Adrenal gland (tissue), 19 donors: ENCODE measurements at regions of chr15 and their contacts with region 1.

Region 1: DNA sequence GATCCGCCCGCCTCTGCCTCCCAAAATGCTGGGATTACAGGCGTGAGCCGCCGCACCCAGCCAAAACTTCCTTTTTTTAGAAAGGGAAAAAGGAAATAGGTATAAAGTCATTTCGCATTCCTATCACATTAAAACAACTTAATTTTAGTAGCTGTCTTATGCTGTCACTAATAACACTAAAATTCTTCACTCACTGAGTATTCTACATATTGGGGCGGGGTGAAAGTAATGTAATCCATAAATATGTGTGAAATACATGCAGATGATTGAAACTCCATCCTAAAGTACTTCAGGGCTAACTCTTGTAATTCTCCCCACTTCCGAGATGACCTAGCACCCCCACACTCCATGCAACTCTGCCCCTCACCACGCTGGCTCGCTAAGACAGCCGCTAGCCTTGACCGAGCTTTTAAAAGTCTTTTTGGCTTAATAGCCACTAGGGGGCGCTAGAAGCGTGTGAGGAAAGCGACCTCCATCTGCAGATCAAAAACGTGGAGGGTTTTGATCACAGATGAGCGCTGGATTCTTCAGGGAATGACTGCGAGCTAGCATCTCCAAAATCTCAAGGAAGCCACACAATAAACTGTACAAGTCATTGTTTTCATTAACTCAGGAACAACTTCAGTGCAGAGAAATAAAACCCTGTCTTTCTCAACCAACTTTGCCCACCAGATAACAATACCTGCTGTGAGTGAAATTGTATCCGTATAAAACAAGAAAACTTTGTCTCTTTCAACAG is 129.3 kb upstream of the IGF1R start:
- DNase-seq: peak; percentile 43 to 69 (median 61)
- H3K4me3 ChIP-seq: no peak overlapping the region
- H3K27ac ChIP-seq: no peak overlapping the region
- H3K4me1 ChIP-seq: peaks cover 0 to 4% of the 10 kb centered on the region in 2 donors
- H3K27me3 ChIP-seq: no peaks in the 10 kb centered on the region
- CTCF ChIP-seq: peak; percentile 76 to 90 (median 84)
- POLR2A ChIP-seq: no peak

Region 2: DNA sequence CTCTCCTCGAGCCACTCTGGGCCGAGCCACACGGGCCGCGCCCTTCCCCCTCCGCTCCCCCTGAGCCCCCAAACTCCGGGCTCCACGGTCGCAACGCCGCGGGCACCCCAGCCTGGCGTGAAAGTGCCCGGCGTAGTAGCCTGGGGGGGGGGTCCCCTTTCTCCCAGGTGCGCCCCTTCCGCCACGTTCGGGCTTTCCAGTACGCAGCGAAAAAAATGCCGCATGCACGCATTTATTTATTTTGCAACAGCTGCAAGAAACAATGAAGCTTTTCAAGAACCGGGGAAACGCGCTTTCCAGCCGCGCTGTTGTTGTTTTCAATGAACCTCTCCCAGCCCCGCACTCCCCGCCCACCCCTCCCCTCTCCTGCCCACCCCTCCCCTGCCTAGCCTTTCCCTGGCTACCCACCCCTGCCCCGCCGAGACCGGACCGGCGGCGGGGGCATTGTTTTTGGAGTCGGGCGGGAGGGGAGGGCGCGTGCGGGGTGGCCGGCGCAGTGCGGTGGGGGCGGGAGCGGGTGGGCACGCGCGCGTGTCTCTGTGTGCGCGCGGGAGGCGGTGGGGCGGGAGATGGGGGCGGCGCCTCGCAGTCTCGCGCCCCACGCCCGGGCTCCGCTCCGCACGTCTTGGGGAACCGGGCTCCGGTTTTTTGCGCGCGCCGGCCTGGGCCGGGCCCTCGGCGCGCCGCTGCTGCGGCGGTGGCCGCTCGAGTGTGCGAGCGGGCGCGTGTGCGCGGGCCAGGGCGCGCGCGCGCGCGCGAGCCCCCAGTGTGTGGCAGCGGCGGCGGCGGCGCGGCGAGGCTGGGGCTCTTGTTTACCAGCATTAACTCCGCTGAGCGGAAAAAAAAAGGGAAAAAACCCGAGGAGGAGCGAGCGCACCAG is 129.0 kb after region 1 on chr15 and contains the start of gene IGF1R:
- intact Hi-C with region 1: loop called (anchors 5 to 10 kb)
- DNase-seq: peak; percentile 85 to 90 (median 87)
- H3K4me3 ChIP-seq: peak within 1 kb of the TSS in 3 of 4 donors; percentile 87 to 96 (median 94)
- H3K27ac ChIP-seq: peak within 1 kb of the TSS in 4 of 5 donors; percentile 74 to 94 (median 90)
- H3K4me1 ChIP-seq: peaks cover 0 to 20% of the 10 kb centered on the region in 2 donors
- H3K27me3 ChIP-seq: peaks cover 26% of the 10 kb centered on the region
- CTCF ChIP-seq: peak in 3 of 6 experiments; percentile 2 to 29 (median 25)
- POLR2A ChIP-seq: peak in 1 of 2 donors; percentile 83
- total RNA-seq, gene IGF1R: 44.1 to 138 (median 73.0) TPM